WTC11 (cell line): ENCODE measurements at regions of chr16 and their contacts with region 1.

Region 1: DNA sequence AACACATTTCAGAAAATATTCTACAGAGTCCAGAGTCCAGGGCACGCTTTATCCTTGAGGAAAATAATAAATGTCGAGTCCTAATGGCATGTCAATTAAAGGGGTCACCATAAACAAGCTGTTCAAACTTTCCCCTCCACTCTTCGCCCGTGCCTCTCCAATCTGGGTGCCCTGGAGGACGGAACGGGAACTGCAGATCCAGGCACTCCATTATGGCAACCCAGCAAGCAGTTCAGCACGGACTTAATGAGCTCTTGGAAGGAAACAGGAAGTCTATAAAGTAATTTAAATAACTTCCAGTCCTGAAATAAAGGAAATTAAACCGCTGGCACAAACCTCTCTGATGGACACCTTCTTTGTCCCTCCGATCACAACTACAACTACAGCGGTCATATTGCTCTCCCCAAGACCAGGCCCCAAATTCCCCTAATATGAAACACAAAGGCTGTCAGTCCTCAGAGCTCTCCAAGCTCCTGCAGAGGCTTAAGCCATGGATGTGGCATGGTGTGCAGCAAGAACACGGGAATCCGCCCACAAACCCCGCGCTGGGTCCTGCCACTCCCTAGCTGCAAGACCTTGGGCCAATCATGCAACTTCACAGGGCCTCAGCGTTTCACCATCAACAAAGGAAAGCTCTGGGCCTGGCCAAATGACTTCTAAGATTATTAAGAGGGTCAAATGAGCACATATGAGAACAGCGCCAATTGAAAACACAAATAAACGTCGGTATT is 52.6 kb downstream of the ZFHX3 start:
- DNase-seq: peak; percentile 73
- ATAC-seq: peak; percentile 86
- H3K4me3 Mint-ChIP-seq: no peak overlapping the region
- H3K27ac Mint-ChIP-seq: no peak overlapping the region
- H3K4me1 Mint-ChIP-seq: peaks cover 32% of the 10 kb centered on the region
- H3K27me3 Mint-ChIP-seq: no peaks in the 10 kb centered on the region; the same call in 1 of the 2 replicates
- CTCF ChIP-seq: peak; percentile 87

Region 2: GRCh38 chr16:72739577-72739976 is 255.7 kb before region 1 on chr16:
- CTCF ChIA-PET with region 1: no interaction called
- POLR2A ChIA-PET with region 1: no interaction called
- DNase-seq: no peak
- ATAC-seq: no peak
- H3K4me3 Mint-ChIP-seq: no peak overlapping the region
- H3K27ac Mint-ChIP-seq: no peak overlapping the region
- H3K4me1 Mint-ChIP-seq: peaks cover 3% of the 10 kb centered on the region; the same call in 1 of the 2 replicates
- H3K27me3 Mint-ChIP-seq: no peaks in the 10 kb centered on the region
- CTCF ChIP-seq: no peak

Region 3: GRCh38 chr16:72932050-72932449 is 63.3 kb before region 1 on chr16:
- CTCF ChIA-PET with region 1: interaction called, 16 read pairs
- POLR2A ChIA-PET with region 1: no interaction called
- DNase-seq: no peak
- ATAC-seq: no peak
- H3K4me3 Mint-ChIP-seq: no peak overlapping the region
- H3K27ac Mint-ChIP-seq: no peak overlapping the region
- H3K4me1 Mint-ChIP-seq: peaks cover 50% of the 10 kb centered on the region
- H3K27me3 Mint-ChIP-seq: no peaks in the 10 kb centered on the region
- CTCF ChIP-seq: no peak

Region 4: DNA sequence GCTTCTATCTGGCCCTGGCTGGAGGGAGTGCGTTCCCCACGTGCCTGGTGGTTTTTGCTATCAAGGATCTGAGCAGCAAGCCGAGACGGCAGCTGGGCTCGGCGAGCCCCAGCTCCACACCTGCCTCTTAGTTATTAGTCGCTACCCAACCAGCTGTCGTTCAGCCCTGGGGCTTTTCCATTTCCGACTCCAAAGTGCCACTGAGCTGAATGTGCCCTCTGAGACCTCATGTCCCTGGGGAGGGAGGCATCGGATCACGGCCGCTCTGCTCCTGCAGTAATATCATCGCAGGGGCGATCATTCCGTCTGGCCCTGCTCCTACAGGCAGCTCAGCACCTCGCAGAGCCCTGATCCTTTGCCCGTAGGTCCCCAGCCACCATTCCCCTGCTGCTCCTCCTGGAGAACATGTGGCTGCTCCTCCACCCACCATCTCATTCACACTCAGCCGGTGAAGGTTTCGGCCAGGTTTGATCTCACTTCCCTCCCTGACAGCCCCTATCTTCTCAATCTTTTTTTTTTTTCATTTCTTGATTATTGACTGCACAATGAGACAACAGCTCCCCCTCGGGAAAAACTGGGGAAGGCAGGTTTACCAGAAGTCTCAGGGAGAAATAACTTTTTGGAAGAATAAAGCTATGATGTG is 34.1 kb before region 1 on chr16:
- CTCF ChIA-PET with region 1: interaction called, 19 read pairs
- POLR2A ChIA-PET with region 1: no interaction called
- DNase-seq: no peak
- ATAC-seq: no peak
- H3K4me3 Mint-ChIP-seq: no peak overlapping the region
- H3K27ac Mint-ChIP-seq: no peak overlapping the region
- H3K4me1 Mint-ChIP-seq: peaks cover 19% of the 10 kb centered on the region
- H3K27me3 Mint-ChIP-seq: no peaks in the 10 kb centered on the region
- CTCF ChIP-seq: no peak

Region 5: GRCh38 chr16:72969146-72969545 is 26.2 kb before region 1 on chr16:
- CTCF ChIA-PET with region 1: interaction called, 18 read pairs
- POLR2A ChIA-PET with region 1: no interaction called
- DNase-seq: no peak
- ATAC-seq: no peak
- H3K4me3 Mint-ChIP-seq: no peak overlapping the region
- H3K27ac Mint-ChIP-seq: no peak overlapping the region
- H3K4me1 Mint-ChIP-seq: no peaks in the 10 kb centered on the region
- H3K27me3 Mint-ChIP-seq: no peaks in the 10 kb centered on the region
- CTCF ChIP-seq: no peak

Region 6: GRCh38 chr16:72974142-72974769 is 21.1 kb before region 1 on chr16:
- CTCF ChIA-PET with region 1: interaction called, 18 read pairs
- POLR2A ChIA-PET with region 1: no interaction called
- DNase-seq: no peak
- ATAC-seq: no peak
- H3K4me3 Mint-ChIP-seq: no peak overlapping the region
- H3K27ac Mint-ChIP-seq: no peak overlapping the region
- H3K4me1 Mint-ChIP-seq: no peaks in the 10 kb centered on the region
- H3K27me3 Mint-ChIP-seq: no peaks in the 10 kb centered on the region
- CTCF ChIP-seq: no peak

Region 7: DNA sequence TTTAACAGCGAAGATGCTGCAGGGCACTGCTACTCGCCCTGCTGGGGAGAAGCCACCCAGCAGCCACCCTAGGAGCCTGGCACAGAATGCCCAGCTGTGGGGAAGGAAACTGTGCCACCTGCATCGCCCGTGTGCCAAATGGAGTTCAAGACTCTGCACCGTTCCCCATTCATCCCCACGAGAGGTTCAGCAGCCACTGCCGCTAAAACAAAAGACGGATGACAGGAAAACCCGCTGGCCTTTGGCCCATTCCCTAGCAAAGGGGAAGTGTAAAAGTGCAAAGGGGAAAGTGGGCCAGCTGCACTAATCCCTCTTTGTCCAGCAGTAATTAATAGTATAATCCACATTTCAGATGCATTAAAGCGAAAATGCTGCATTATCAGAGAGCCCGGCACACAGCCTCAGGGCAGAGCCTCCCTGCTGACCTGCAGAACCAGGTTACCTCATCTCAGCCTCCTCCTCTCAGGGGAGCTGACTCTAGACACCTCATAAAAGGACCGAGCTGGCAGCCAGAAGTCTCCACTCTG is 14.9 kb after region 1 on chr16:
- CTCF ChIA-PET with region 1: interaction called, 47 read pairs
- POLR2A ChIA-PET with region 1: interaction called, 3 read pairs
- DNase-seq: no peak
- ATAC-seq: peak; percentile 50
- H3K4me3 Mint-ChIP-seq: no peak overlapping the region
- H3K27ac Mint-ChIP-seq: no peak overlapping the region
- H3K4me1 Mint-ChIP-seq: peaks cover 21% of the 10 kb centered on the region
- H3K27me3 Mint-ChIP-seq: no peaks in the 10 kb centered on the region; the same call in 1 of the 2 replicates
- CTCF ChIP-seq: no peak

Region 8: DNA sequence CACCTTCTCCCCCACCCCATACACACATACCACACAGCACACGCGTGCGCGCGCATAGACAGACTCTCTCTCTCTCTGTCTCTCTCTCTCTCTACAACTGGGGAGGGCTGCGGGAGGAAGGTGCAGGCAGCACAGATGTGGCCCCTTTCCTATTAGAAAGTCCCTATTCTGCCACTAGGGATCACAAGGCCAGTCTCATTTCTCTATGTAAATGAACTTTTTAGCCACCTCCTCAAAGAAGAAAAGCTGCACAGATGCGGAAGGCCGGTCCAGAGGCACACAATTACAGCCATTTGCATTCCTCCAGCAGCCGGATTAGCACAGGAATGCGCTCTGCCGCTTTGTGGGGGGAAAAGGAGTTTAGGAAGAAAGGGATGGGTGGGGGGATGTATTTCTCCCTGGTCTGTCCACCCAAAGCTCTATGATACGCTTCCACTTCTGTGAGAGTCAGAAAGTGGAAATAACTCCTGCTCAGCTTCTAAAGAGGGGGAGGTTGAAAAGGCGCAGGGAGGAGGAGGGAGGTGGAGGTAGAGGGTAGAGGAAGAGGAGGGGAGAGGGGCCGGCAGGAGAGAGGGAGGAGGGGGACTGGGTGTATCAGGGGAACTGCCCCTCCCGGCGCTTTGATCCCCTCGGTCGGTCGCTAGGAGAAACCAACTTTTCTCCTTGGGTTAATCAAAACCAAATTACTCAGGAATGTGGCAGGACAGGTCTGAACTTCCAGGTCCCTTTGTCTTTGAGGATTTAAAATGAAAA is 40.9 kb after region 1 on chr16:
- CTCF ChIA-PET with region 1: interaction called, 25 read pairs
- POLR2A ChIA-PET with region 1: no interaction called
- DNase-seq: peak; percentile 63
- ATAC-seq: peak; percentile 24
- H3K4me3 Mint-ChIP-seq: peak overlapping the region; percentile 71
- H3K27ac Mint-ChIP-seq: peak overlapping the region; percentile 61
- H3K4me1 Mint-ChIP-seq: peaks cover 91% of the 10 kb centered on the region
- H3K27me3 Mint-ChIP-seq: peaks cover 100% of the 10 kb centered on the region
- CTCF ChIP-seq: no peak

Region 9: GRCh38 chr16:73390936-73391335 is 395.6 kb after region 1 on chr16:
- CTCF ChIA-PET with region 1: no interaction called
- POLR2A ChIA-PET with region 1: no interaction called
- DNase-seq: no peak
- ATAC-seq: no peak
- H3K4me3 Mint-ChIP-seq: no peak overlapping the region
- H3K27ac Mint-ChIP-seq: no peak overlapping the region
- H3K4me1 Mint-ChIP-seq: no peaks in the 10 kb centered on the region
- H3K27me3 Mint-ChIP-seq: no peaks in the 10 kb centered on the region
- CTCF ChIP-seq: no peak